Left ventricle myocardium superior (tissue), 1 donor: ENCODE measurements at regions of chr6 and their contacts with region 1.

Region 1: GRCh38 chr6:90393232-90393884 is 96.7 kb upstream of the BACH2 start:
- DNase-seq: no peak
- ATAC-seq: peak; percentile 72

Region 2: GRCh38 chr6:89940225-89941027 is 452.9 kb before region 1 on chr6:
- intact Hi-C with region 1: loop called (anchors 10 kb)
- DNase-seq: peak; percentile 50
- ATAC-seq: peak; percentile 96